Posterior vena cava (tissue), 2 donors: ENCODE measurements at regions of chr1 and their contacts with region 1.

Region 1: DNA sequence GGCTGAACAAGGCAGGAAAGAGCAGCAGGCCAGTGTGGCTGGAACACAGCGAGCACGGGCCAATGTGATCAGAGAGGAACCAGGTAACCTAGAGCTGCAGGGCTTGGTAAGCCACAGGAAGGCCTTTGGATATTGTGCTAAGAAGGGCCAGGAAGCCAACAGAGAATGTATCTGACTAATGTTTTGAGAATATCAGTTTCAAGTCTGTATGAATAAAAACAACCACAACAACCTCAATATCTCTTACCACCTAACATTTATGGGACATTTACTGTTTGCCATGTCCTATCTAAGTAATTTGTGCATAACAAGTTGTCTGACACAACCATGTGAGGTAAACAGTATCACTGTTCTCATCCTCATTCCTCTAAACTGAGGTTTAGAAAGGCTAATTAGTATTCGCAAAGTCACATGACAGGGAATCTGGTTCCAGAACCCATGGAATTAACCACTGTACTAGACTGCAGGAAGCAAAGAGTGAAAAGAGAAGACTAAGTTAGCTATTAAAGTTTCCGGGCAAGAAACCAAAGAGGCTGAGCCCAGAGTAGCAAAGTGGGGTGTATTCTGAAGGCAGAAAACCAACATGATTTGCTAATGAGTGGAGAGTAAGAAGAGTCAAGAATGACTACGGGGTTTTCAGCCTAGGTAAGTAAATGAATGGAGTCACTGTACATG is 38.9 kb downstream of the SPRTN start:
- DNase-seq: no peak

Region 2: DNA sequence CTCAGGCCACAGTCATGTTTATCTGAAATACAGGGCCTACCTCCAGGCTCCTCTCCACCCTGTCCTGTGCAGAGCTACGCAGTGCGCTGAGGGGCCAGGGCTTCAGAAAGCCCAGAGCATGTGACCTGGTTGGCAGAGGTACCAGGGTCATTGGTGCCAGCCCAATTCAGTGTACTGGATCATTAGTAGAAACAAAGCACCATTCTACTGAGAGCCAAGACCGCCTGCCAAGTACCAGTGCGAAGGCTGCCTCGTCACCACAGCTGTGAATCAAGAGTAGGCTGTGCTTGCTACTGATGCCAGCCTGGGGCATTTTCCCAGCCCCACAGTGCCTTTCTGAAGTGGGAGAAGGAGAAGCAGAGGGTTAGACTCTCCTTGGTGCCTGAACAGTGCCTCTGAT is 570.0 kb before region 1 on chr1:
- intact Hi-C with region 1: no loop called
- DNase-seq: no peak

Region 3: GRCh38 chr1:231534703-231535159 is 157.7 kb after region 1 on chr1:
- intact Hi-C with region 1: loop called in 1 of 2 experiments (anchors 10 kb)
- DNase-seq: no peak

Region 4: GRCh38 chr1:231590453-231591198 is 213.6 kb after region 1 on chr1:
- intact Hi-C with region 1: loop called in 1 of 2 experiments (anchors 10 kb)
- DNase-seq: no peak